ENCODE measurements at regions of chr17 and their contacts with region 1.

Region 1: DNA sequence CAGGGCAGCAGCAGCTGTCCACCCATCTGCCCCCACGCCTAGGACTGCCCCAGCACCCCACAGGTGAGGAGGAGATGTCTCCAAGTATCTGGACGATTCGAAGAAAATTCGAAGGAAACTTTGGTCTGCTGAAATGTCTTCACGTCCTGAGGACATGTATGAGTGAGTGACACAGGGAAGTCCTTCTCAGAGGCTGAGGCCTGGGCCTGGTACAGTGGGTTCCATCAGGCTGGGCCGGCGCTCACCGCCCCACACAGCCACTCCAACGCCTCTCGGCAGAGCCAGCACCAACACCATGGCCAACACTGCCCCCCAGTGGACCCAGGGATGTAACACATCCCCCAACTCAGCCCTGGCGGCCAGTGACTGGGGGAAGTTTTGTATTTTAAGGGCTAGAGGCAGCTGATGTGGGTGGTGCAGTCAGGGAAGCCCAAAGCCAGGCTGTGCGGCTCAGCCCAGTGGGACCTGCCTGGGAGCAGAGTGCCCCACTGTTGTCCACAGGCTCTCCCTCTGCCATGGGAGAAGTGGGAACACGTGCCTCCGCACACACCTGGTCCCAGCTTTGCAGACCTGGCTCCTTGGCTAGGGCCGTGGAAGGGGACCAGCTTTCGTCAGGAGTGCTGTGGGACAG is 55.8 kb upstream of the FASN start:
- DNase-seq: peak; percentile 93
- CTCF ChIP-seq: peak; percentile 89

Region 2: DNA sequence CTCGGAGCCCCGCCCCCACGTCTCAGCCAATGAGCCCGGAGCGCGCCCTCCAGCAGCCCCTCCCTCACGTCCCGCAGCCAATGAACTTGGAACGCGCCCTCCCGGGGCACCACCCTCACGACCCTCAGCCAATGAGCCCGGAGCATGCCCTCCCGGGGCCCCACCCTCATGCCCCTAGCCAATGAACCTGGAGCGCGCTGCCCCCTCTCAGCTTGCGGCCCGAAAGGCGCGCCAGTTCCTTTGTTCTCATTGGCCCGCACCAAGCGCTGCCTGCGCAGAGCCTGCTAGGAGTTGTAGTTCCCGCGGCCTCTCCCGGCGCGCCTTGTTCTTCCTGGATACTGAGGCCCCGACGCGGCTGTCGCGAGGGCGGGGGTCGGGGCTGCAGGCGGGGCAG is 130.9 kb before region 1 on chr17 and contains the start of gene LRRC45:
- in situ Hi-C with region 1: loop called (anchors 10 kb)
- DNase-seq: peak; percentile 99
- CTCF ChIP-seq: no peak